T-cell (primary cell): ENCODE measurements at regions of chr4 and their contacts with region 1.

Region 1: DNA sequence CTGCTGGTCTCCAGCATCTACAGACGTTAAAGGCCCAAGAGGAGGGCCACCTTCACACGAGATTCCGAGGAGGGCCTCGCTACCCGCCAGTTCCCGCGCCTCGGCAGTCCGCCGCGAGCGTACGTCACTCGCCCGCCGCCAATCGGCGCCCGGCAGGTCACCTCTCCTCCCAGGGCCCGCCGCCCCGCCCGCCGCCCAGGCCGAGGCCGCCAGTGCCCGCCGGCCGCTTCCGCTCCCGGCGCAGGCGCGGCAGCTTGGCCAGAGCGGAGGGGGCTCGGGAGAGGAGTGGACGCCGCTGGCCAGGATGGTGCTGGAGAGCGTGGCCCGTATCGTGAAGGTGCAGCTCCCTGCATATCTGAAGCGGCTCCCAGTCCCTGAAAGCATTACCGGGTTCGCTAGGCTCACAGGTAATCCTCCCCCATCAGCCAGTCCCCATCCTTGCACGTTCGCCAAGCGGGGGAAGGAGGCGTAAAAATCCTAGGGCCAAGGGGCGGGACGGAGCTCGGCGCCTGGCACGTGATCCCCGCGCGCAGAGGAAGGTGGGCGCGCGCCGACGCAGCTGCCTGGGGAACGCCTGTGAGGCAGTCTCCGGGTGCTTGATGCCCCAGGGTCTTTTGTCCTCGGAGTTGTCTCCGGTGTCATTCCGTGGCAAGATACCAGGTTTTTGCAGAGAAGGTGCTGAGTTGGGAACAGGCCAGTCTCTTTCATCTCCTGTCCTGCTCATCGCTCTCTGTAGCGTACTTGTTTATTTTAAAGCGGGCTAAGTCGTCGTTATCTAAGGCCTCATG is at the start of gene CISD2:
- DNase-seq: peak; percentile 81 to 95 (median 90)
- ATAC-seq: peak; percentile 86 to 89 (median 86)
- H3K4me3 ChIP-seq: peak within 1 kb of the TSS; percentile 85 to 87
- H3K4me3 Mint-ChIP-seq: peak within 1 kb of the TSS; percentile 91 to 98 (median 96)
- H3K27ac ChIP-seq: peak within 1 kb of the TSS; percentile 93
- H3K27ac Mint-ChIP-seq: peak within 1 kb of the TSS; percentile 98 to 99
- H3K4me1 ChIP-seq: peaks cover 14 to 39% of the 10 kb centered on the region in 2 experiments
- H3K4me1 Mint-ChIP-seq: peaks cover 56 to 70% (median 70%) of the 10 kb centered on the region in 3 donors
- H3K27me3 ChIP-seq: no peaks in the 10 kb centered on the region
- H3K27me3 Mint-ChIP-seq: no peaks in the 10 kb centered on the region
- total RNA-seq, gene CISD2: 12.2 to 14.2 (median 13.1) TPM

Region 2: GRCh38 chr4:102439236-102439614 is 429.8 kb before region 1 on chr4:
- CTCF ChIA-PET with region 1: no interaction called
- POLR2A ChIA-PET with region 1: interaction called in 1 of 2 experiments, 10 read pairs
- DNase-seq: no peak
- ATAC-seq: no peak
- H3K4me3 ChIP-seq: no peak overlapping the region
- H3K4me3 Mint-ChIP-seq: no peak overlapping the region
- H3K27ac ChIP-seq: no peak overlapping the region
- H3K27ac Mint-ChIP-seq: no peak overlapping the region
- H3K4me1 ChIP-seq: no peaks in the 10 kb centered on the region
- H3K4me1 Mint-ChIP-seq: no peaks in the 10 kb centered on the region
- H3K27me3 ChIP-seq: no peaks in the 10 kb centered on the region
- H3K27me3 Mint-ChIP-seq: no peaks in the 10 kb centered on the region

Region 3: GRCh38 chr4:102815981-102816380 is 53.0 kb before region 1 on chr4:
- CTCF ChIA-PET with region 1: no interaction called
- POLR2A ChIA-PET with region 1: interaction called in 1 of 2 experiments, 40 read pairs
- DNase-seq: no peak
- ATAC-seq: no peak
- H3K4me3 ChIP-seq: no peak overlapping the region
- H3K4me3 Mint-ChIP-seq: peak overlapping the region in 1 of 3 donors; percentile 52
- H3K27ac ChIP-seq: peak overlapping the region; percentile 13
- H3K27ac Mint-ChIP-seq: peak overlapping the region in 1 of 2 donors; percentile 23
- H3K4me1 ChIP-seq: peaks cover 45 to 75% of the 10 kb centered on the region in 2 experiments
- H3K4me1 Mint-ChIP-seq: peaks cover 86 to 94% (median 92%) of the 10 kb centered on the region in 3 donors
- H3K27me3 ChIP-seq: no peaks in the 10 kb centered on the region
- H3K27me3 Mint-ChIP-seq: no peaks in the 10 kb centered on the region

Region 4: GRCh38 chr4:102843273-102843672 is 25.7 kb before region 1 on chr4:
- CTCF ChIA-PET with region 1: interaction called in 1 of 2 experiments, 4 read pairs
- POLR2A ChIA-PET with region 1: interaction called, 7 to 11 read pairs
- DNase-seq: no peak
- ATAC-seq: no peak
- H3K4me3 ChIP-seq: no peak overlapping the region
- H3K4me3 Mint-ChIP-seq: no peak overlapping the region
- H3K27ac ChIP-seq: no peak overlapping the region
- H3K27ac Mint-ChIP-seq: no peak overlapping the region
- H3K4me1 ChIP-seq: peaks cover 0 to 5% of the 10 kb centered on the region in 2 experiments
- H3K4me1 Mint-ChIP-seq: no peaks in the 10 kb centered on the region
- H3K27me3 ChIP-seq: no peaks in the 10 kb centered on the region
- H3K27me3 Mint-ChIP-seq: no peaks in the 10 kb centered on the region